Heart left ventricle (tissue), 16 donors: ENCODE measurements at regions of chr14 and their contacts with region 1.

Region 1: GRCh38 chr14:20697273-20698017 is 8.9 kb downstream of the ANG start:
- DNase-seq: peak in 4 of 5 donors; percentile 40 to 71 (median 52)
- ATAC-seq: peak; percentile 15 to 89 (median 80)
- H3K4me3 ChIP-seq: no peak overlapping the region
- H3K27ac ChIP-seq: no peak overlapping the region
- H3K4me1 ChIP-seq: peaks cover 0 to 9% (median 0%) of the 10 kb centered on the region in 12 donors
- H3K27me3 ChIP-seq: no peaks in the 10 kb centered on the region
- CTCF ChIP-seq: peak; percentile 62 to 84 (median 77)
- POLR2A ChIP-seq: no peak

Region 2: GRCh38 chr14:20644520-20644919 is 52.9 kb before region 1 on chr14:
- intact Hi-C with region 1: no loop called
- DNase-seq: no peak
- ATAC-seq: no peak
- H3K4me3 ChIP-seq: no peak overlapping the region
- H3K27ac ChIP-seq: no peak overlapping the region
- H3K4me1 ChIP-seq: no peaks in the 10 kb centered on the region
- H3K27me3 ChIP-seq: peaks cover 0 to 55% (median 12%) of the 10 kb centered on the region in 9 donors
- CTCF ChIP-seq: no peak
- POLR2A ChIP-seq: no peak

Region 3: DNA sequence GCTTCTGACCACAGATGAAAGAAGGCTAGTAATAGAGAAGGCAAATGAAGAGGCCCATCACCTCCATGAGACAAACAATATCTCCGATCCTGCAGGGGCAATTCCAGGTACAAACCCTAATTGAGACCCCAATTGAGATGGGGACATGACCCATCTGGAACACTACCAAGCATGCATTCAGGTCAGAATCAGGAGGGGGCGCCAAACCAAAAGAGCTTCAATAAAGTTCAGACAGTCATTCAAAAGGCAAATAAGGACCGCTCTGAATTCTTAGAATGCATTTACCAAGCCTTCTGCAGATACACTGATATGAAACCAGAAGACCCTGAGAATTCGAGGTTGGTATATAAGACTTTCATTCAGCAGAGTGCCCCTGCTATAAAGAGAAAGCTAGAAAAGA is 60.5 kb after region 1 on chr14:
- intact Hi-C with region 1: loop called in 1 of 10 experiments (anchors 5 kb)
- DNase-seq: peak in 2 of 5 donors; percentile 28 to 33
- ATAC-seq: no peak
- H3K4me3 ChIP-seq: no peak overlapping the region
- H3K27ac ChIP-seq: no peak overlapping the region
- H3K4me1 ChIP-seq: peaks cover 0 to 7% (median 0%) of the 10 kb centered on the region in 12 donors
- H3K27me3 ChIP-seq: no peaks in the 10 kb centered on the region
- CTCF ChIP-seq: peak; percentile 32 to 60 (median 43)
- POLR2A ChIP-seq: no peak

Region 4: GRCh38 chr14:20799892-20800544 is 102.6 kb after region 1 on chr14:
- intact Hi-C with region 1: loop called in 1 of 10 experiments (anchors 5 kb)
- DNase-seq: peak; percentile 54 to 75 (median 67)
- ATAC-seq: peak; percentile 56 to 80 (median 66)
- H3K4me3 ChIP-seq: peak overlapping the region in 11 of 12 donors; percentile 8 to 83 (median 61)
- H3K27ac ChIP-seq: peak overlapping the region; percentile 62 to 93 (median 84)
- H3K4me1 ChIP-seq: peaks cover 0 to 64% (median 23%) of the 10 kb centered on the region in 12 donors
- H3K27me3 ChIP-seq: no peaks in the 10 kb centered on the region
- CTCF ChIP-seq: no peak
- POLR2A ChIP-seq: no peak

Region 5: GRCh38 chr14:20873370-20874177 is 176.1 kb after region 1 on chr14:
- intact Hi-C with region 1: loop called in 5 of 10 experiments (anchors 5 kb)
- DNase-seq: peak; percentile 84 to 93 (median 88)
- ATAC-seq: peak; percentile 78 to 97 (median 97)
- H3K4me3 ChIP-seq: peak overlapping the region in 8 of 12 donors; percentile 15 to 35 (median 25)
- H3K27ac ChIP-seq: no peak overlapping the region
- H3K4me1 ChIP-seq: peaks cover 0 to 13% (median 2%) of the 10 kb centered on the region in 12 donors
- H3K27me3 ChIP-seq: no peaks in the 10 kb centered on the region
- CTCF ChIP-seq: peak; percentile 67 to 94 (median 83)
- POLR2A ChIP-seq: no peak

Region 6: DNA sequence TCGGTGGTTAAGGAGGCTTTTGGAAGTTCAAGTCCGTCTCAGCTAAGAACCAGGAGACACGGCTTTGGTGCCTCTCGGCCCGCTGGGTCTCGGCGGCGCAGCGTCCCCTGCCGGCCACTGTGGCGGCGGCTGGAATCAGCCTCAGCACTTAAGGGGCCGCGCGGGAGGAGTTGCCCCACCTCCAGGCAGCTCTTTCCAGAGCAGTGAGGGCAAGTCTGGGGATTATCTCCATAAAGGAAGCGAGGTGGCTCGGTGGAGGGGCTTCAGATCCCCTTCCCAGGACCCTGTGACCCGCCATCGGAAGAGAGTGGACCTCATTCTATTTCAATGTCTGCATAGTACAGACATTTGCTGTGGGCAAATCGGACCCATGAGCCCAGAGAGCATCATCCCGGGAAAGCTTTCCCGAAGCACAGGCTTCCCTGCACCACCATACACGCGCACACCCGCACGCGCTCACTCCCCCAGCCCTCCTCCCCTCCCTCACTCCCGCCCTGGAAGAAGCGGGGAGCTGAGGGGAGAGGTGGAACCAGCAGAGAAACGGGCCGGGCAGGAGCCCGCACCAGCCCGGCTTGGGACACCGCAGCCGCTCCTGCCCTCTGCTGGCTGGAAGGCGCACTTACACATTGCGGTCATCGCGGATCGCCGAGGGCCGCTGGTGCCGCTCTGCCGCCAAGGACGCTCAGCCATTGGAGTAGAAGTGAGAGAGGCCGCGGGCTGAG is 273.7 kb after region 1 on chr14:
- intact Hi-C with region 1: loop called in 8 of 10 experiments (anchors 2 to 10 kb)
- DNase-seq: peak; percentile 85 to 93 (median 86)
- ATAC-seq: peak; percentile 92 to 97 (median 96)
- H3K4me3 ChIP-seq: peak overlapping the region; percentile 43 to 73 (median 64)
- H3K27ac ChIP-seq: peak overlapping the region in 11 of 12 donors; percentile 14 to 83 (median 58)
- H3K4me1 ChIP-seq: peaks cover 0 to 13% (median 5%) of the 10 kb centered on the region in 12 donors
- H3K27me3 ChIP-seq: no peaks in the 10 kb centered on the region
- CTCF ChIP-seq: peak; percentile 68 to 90 (median 76)
- POLR2A ChIP-seq: no peak